ENCODE measurements at regions of chr11 and their contacts with region 1.

Region 1: DNA sequence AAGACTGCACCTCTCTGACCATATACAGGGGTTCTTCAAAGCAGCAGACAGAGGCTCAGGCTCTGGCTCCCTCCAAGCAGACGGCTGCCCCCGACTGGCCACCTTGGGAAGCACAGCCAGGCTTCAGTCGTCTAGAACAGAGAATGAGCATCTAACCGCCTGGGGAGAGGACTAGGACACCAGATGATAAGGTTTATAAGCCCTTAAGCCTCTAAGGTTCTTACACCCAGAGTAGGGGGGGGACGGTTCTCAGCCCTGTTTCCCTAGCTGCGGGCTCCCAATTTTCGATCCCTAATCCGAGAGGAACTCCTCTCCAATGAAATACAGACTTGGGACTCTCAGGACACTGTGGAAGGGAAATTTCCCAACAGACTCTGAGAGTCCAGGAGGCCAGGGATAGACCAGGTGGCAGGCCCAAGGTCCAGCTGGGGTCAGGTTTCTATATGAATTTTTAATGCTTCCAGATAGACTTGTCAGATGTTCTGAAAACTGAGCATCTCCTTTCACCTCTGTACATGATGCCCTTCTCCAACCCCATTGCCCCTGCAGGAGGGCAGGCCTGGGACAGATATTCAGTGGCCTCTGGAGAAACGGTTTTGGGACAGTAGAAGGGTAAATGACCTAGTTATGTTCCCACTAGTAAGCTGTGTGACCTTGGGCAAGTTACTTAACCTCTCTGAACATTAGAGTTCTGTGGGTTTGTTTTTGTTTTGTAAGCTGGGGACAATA is 20.2 kb downstream of the RTN4RL2 start:
- DNase-seq: peak; percentile 77 to 91
- ATAC-seq: peak; percentile 72 to 76
- H3K4me3 ChIP-seq: no peak overlapping the region
- H3K27ac ChIP-seq: peak overlapping the region in 1 of 2 experiments; percentile 45; a peak in 2 of 6 replicates
- H3K4me1 ChIP-seq: peaks cover 50% of the 10 kb centered on the region
- CTCF ChIP-seq: peak; percentile 73
- EP300 ChIP-seq: no peak
- POLR2A ChIP-seq: no peak
- RAD21 ChIP-seq: peak; percentile 60 to 69

Region 2: GRCh38 chr11:57499413-57499982 is 18.9 kb after region 1 on chr11:
- CTCF ChIA-PET with region 1: interaction called, 182 read pairs
- POLR2A ChIA-PET with region 1: no interaction called
- DNase-seq: peak; percentile 83 to 98
- ATAC-seq: peak; percentile 98 to 100
- H3K4me3 ChIP-seq: peak overlapping the region; percentile 23; the same call in 2 of the 3 replicates
- H3K27ac ChIP-seq: peak overlapping the region; percentile 62 to 84; a peak in 5 of 6 replicates
- H3K4me1 ChIP-seq: peaks cover 11% of the 10 kb centered on the region; the same call in 2 of the 3 replicates
- CTCF ChIP-seq: no peak
- EP300 ChIP-seq: no peak
- POLR2A ChIP-seq: peak; percentile 38; the same call in 1 of the 2 replicates
- RAD21 ChIP-seq: no peak

Region 3: DNA sequence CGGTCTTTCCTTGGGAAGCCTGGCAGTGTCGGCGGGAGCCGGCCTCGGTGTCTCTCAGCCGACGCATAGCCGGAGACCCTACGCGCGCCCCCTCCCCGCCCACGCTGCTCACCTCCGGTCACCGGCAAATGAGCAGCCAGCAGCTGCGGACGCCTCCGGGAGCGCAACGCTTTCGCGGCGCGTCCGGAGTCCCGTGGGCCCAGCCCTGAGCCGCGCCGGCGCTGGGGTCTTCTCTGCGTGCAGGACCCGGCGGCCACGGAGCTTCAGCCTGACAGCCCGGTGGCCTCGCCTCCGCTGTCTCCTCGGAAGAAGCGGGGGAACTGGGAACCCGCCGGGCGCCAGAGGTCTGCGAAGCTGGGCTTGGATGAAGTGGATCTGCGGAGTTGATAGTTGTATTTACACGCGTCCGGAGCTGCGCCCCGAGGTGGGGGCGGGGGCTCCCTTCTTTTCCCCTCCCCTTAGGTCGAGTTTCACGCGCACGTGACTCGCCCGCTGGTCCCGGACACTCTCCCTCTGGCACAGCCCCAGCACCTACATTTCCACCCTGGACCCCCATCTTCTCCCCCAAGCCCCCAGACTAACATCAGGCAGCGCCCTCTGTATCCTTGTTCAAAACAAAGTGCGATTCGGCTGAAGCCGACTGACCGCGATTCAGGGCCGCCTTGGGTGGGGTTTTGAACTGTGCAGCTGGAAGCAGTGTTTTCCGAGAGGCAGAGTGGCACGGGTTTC is 34.9 kb after region 1 on chr11 and contains the start of gene SLC43A1:
- CTCF ChIA-PET with region 1: interaction called, 13 read pairs
- POLR2A ChIA-PET with region 1: no interaction called
- DNase-seq: peak in 1 of 2 experiments; percentile 65
- ATAC-seq: peak; percentile 51 to 76
- H3K4me3 ChIP-seq: peak within 1 kb of the TSS; percentile 78
- H3K27ac ChIP-seq: peak within 1 kb of the TSS; percentile 68 to 85
- H3K4me1 ChIP-seq: peaks cover 4% of the 10 kb centered on the region; the same call in 1 of the 3 replicates
- CTCF ChIP-seq: no peak
- EP300 ChIP-seq: no peak
- POLR2A ChIP-seq: no peak
- RAD21 ChIP-seq: no peak
- polyA plus RNA-seq, gene SLC43A1: 4.6 and 5.3 TPM in 2 replicates

Region 4: DNA sequence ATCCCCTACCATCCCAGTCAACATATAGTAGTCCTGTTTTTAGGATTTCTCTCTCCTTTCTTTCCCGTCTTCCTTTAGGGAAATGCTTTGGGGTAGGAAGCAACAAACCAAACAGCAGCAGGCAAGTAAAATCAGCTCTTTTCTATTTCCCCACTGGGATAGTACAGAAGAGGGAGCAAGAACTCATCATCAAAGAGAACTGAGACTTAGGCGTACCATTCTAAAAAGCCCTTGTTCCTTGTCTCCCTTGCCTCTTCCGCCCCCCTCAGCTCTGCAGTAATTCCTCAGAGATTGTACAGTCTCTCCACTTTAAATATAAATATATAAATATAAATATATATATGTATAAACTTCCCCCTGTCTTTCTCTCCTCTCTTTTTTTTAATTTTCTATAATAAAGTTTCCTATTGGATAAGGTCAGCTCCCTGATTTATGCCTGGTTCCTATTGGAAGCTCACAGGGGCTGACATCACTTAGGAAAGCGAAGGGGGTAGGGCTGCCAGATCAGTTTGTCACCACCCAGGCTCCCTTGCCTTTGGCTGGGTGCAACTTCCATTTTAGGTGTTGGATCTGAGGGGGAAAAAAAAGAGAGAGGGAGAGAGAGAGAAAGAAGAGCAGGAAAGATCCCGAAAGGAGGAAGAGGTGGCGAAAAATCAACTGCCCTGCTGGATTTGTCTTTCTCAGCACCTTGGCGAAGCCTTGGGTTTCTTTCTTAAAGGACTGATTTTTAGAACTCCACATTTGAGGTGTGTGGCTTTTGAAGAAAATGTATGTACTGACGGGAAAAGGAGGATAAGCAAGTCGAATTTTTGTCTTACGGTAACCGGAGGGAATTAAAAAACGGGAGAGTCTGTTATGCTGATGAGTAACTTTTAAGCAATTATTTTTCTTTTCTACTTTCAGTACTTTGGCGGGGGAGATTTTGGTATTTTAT is 281.0 kb after region 1 on chr11 and contains the start of gene CTNND1:
- CTCF ChIA-PET with region 1: no interaction called
- POLR2A ChIA-PET with region 1: no interaction called
- DNase-seq: peak; percentile 98 to 99
- ATAC-seq: peak; percentile 98 to 99
- H3K4me3 ChIP-seq: peak within 1 kb of the TSS; percentile 73
- H3K27ac ChIP-seq: peak within 1 kb of the TSS; percentile 91 to 97
- H3K4me1 ChIP-seq: peaks cover 22% of the 10 kb centered on the region
- CTCF ChIP-seq: no peak
- EP300 ChIP-seq: no peak
- POLR2A ChIP-seq: peak; percentile 36
- RAD21 ChIP-seq: peak in 1 of 2 experiments; percentile 28; a peak in 1 of 5 replicates
- polyA plus RNA-seq, gene CTNND1: 146 and 148 TPM in 2 replicates

Measured in A549 (cell line).